Activated CD8-positive, alpha-beta T cell treated with anti-CD3 and anti-CD28 coated beads, Interleukin-2, amount 10 ng/mL, durations not matched to agents 7 days and 5 days (primary cell): ENCODE measurements at regions of chr9 and their contacts with region 1.

Region 1: DNA sequence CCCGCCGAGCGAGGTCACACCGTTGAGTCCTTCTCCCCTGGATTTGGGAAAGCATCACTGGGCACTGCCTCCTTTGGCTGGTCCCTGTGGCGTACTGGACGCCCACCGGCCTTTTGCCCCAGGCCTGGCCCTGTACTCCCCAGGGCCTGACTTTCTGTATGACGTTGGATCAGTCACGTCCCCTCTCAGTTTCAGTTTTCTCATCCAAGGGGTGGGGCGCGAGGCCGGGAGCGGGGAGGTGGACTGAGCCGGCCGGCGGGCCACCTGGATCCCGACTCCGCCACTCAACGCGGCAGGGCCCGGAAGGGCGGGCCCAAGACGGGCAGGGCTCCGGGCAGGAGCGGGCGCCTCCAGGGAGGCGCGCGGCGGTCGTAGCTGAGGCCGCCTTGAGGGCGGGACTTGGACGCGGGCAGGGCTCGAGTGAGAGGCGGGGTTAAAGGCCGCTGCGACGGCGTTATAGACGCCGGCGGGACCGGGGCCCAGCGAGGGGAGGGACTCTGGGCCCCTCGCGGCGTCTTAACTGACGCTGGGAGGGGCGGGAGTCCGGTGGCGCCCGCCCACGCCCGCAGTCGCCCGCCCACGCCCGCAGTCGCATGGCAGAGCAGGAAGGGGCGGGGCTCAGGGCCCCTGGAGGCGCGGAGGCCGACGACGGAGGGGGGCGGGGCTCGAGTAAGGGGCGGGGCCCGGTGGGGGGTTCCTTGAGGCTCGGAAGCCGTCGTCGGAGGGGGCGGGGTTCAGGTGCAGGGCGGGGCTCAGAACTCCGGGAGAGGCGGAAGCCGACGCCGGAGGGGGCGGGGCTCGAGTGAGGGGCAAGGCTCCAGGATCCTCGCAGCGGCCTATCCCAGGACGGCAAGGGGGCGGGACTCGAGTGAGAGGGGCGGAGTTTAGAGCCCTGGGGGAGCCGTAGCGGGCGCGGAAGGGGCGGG is 549 bp upstream of the CARD19 start:
- DNase-seq: peak; percentile 100
- ATAC-seq: peak; percentile 84
- H3K4me3 Mint-ChIP-seq: peak overlapping the region; percentile 74
- H3K27ac Mint-ChIP-seq: peak overlapping the region; percentile 98
- H3K4me1 Mint-ChIP-seq: peaks cover 79% of the 10 kb centered on the region
- H3K27me3 Mint-ChIP-seq: no peaks in the 10 kb centered on the region

Region 2: GRCh38 chr9:93082841-93083411 is 12.5 kb before region 1 on chr9:
- CTCF ChIA-PET with region 1: no interaction called
- POLR2A ChIA-PET with region 1: interaction called, 22 read pairs
- DNase-seq: no peak
- ATAC-seq: peak; percentile 57
- H3K4me3 Mint-ChIP-seq: no peak overlapping the region
- H3K27ac Mint-ChIP-seq: peak overlapping the region; percentile 83
- H3K4me1 Mint-ChIP-seq: peaks cover 42% of the 10 kb centered on the region
- H3K27me3 Mint-ChIP-seq: no peaks in the 10 kb centered on the region